ENCODE measurements at regions of chr19 and their contacts with region 1.

Region 1: GRCh38 chr19:47256688-47257443 is 541 bp downstream of the CCDC9 start:
- DNase-seq: peak; percentile 96 to 100 (median 98)
- ATAC-seq: peak; percentile 77
- H3K4me3 ChIP-seq: peak overlapping the region; percentile 72
- H3K4me3 Mint-ChIP-seq: peak overlapping the region; percentile 84
- H3K27ac ChIP-seq: peak overlapping the region; percentile 69 to 91
- H3K27ac Mint-ChIP-seq: peak overlapping the region; percentile 97
- H3K4me1 ChIP-seq: peaks cover 30% of the 10 kb centered on the region
- H3K4me1 Mint-ChIP-seq: peaks cover 39% of the 10 kb centered on the region
- H3K27me3 ChIP-seq: no peaks in the 10 kb centered on the region
- H3K27me3 Mint-ChIP-seq: no peaks in the 10 kb centered on the region
- CTCF ChIP-seq: no peak

Region 2: DNA sequence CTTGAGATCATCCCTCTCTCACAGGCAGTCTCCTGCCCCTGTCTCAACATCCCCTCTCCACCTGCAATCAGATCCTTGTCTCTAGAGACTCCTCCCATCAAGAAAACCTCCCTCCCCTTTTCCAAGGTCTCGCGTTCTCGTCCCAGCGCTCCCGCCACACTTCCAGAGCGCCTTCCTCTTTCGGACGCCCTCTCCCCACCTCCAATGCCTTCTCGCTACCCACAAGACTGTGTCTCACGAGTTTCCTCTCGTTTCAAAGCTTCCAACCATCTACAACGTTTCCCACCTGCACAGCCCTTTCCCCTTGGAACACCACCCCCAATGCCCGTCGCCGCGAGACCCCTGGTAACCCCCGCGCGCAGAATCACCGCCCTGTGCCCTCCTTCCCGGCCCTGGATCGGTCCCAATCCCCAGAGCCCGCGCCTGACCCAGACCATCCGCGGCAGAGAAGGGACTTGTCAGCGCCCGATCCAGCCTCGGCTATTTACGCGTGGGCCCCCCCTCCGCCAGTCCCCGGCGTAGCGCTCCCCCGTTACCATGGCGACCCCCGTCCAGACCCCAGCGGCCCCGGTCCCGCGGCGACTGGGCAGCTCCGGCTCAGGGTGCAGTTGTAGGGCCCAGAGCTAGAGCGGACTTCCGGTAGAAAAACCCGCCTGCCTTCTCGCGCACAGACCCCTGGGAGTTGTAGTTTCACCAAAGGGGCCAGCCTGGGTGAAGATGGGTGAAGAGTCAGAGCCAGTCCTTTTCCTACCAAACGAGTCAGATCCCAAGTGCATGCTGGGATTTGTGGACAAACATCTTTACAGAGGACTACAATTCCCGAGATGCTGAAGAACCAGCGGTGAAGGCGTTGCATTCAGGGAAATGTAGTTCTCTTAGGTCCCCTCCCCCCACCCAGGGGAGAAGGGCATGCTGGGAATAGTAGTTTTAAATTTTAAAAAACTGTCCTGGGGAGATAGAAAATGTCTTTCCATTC is 406.4 kb before region 1 on chr19 and contains the start of gene AP2S1:
- CTCF ChIA-PET with region 1: no interaction called
- POLR2A ChIA-PET with region 1: no interaction called
- intact Hi-C with region 1: loop called in 1 of 2 experiments (anchors 10 kb)
- DNase-seq: peak; percentile 81 to 98 (median 90)
- ATAC-seq: peak; percentile 95
- H3K4me3 ChIP-seq: peak within 1 kb of the TSS; percentile 76
- H3K4me3 Mint-ChIP-seq: peak within 1 kb of the TSS; percentile 90
- H3K27ac ChIP-seq: peak within 1 kb of the TSS; percentile 39 to 71
- H3K27ac Mint-ChIP-seq: peak within 1 kb of the TSS; percentile 62
- H3K4me1 ChIP-seq: peaks cover 17% of the 10 kb centered on the region
- H3K4me1 Mint-ChIP-seq: peaks cover 33% of the 10 kb centered on the region
- H3K27me3 ChIP-seq: no peaks in the 10 kb centered on the region
- H3K27me3 Mint-ChIP-seq: no peaks in the 10 kb centered on the region
- CTCF ChIP-seq: no peak
- total RNA-seq, gene AP2S1: 24.5 to 26.9 TPM

Region 3: DNA sequence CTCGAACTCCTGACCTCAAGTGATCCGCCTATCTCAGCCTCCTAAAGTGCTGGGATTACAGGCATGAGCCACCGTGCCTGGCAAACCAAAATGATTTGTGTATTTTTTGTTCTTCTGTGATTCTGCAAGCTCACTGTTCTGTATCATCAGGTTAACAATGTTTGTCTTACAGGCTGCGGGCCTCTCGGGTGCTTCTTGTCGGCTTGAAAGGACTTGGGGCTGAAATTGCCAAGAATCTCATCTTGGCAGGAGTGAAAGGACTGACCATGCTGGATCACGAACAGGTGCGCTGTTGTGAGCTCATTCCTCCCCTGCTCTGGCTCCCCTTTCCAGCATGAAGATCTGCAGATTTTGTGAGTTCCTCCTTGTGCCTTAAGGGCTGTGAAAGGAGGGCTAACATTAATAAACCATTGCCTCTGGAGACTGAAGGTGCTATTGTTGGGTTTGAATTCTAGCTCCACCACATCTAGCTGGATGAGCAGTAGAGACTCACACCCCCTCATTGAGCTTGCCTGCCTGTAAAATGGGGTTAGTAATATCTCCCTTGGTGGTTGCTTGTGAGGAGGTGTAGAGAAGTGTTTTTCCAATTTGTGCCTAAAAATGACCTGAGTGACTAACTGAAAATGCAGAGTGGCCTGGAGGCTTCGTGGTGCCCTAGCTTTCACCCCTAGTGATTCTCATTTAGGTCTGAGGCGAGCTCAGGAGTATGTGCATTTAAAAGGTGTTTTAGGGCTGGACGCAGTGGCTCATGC is 113.4 kb before region 1 on chr19:
- CTCF ChIA-PET with region 1: no interaction called
- POLR2A ChIA-PET with region 1: interaction called, 13 read pairs
- intact Hi-C with region 1: no loop called
- DNase-seq: no peak
- ATAC-seq: no peak
- H3K4me3 ChIP-seq: no peak overlapping the region
- H3K4me3 Mint-ChIP-seq: no peak overlapping the region
- H3K27ac ChIP-seq: no peak overlapping the region
- H3K27ac Mint-ChIP-seq: no peak overlapping the region
- H3K4me1 ChIP-seq: peaks cover 42% of the 10 kb centered on the region
- H3K4me1 Mint-ChIP-seq: peaks cover 56% of the 10 kb centered on the region
- H3K27me3 ChIP-seq: no peaks in the 10 kb centered on the region
- H3K27me3 Mint-ChIP-seq: no peaks in the 10 kb centered on the region
- CTCF ChIP-seq: no peak

Region 4: DNA sequence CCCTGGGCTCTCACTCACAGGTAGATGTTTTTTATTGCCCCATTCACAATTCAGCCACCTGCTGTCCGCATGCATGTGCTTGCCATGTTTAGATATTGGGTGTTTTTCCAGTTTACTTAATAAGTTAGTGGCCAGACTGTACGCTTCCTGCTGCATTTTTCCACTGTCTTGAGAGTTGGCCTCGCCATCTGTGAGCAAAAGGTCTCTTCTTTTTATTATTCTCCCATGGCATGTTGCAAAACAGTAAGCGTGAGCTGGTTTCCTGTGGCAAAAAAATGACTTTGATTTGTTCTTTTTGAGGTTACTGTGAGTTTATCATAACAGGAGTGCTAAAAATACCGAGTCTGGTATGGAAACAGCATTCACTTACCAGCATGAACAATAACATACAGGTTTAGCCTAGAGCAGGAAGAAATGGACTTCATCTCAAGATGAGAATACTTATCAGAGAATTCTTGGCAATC is 80.2 kb before region 1 on chr19:
- CTCF ChIA-PET with region 1: no interaction called
- POLR2A ChIA-PET with region 1: interaction called, 10 read pairs
- intact Hi-C with region 1: no loop called
- DNase-seq: peak in 11 of 14 experiments; percentile 22 to 82 (median 43)
- ATAC-seq: peak; percentile 85
- H3K4me3 ChIP-seq: peak overlapping the region; percentile 6
- H3K4me3 Mint-ChIP-seq: peak overlapping the region; percentile 81
- H3K27ac ChIP-seq: peak overlapping the region; percentile 60 to 68
- H3K27ac Mint-ChIP-seq: peak overlapping the region; percentile 98
- H3K4me1 ChIP-seq: peaks cover 56% of the 10 kb centered on the region
- H3K4me1 Mint-ChIP-seq: peaks cover 69% of the 10 kb centered on the region
- H3K27me3 ChIP-seq: no peaks in the 10 kb centered on the region
- H3K27me3 Mint-ChIP-seq: no peaks in the 10 kb centered on the region
- CTCF ChIP-seq: no peak

Region 5: GRCh38 chr19:47225746-47226425 is 31.0 kb before region 1 on chr19:
- CTCF ChIA-PET with region 1: no interaction called
- POLR2A ChIA-PET with region 1: interaction called, 32 read pairs
- intact Hi-C with region 1: loop called in 1 of 2 experiments (anchors 1 kb)
- DNase-seq: peak; percentile 79 to 95 (median 86)
- ATAC-seq: peak; percentile 54
- H3K4me3 ChIP-seq: peak overlapping the region; percentile 56
- H3K4me3 Mint-ChIP-seq: peak overlapping the region; percentile 72
- H3K27ac ChIP-seq: peak overlapping the region in 1 of 2 donors; percentile 85
- H3K27ac Mint-ChIP-seq: peak overlapping the region; percentile 85
- H3K4me1 ChIP-seq: peaks cover 48% of the 10 kb centered on the region
- H3K4me1 Mint-ChIP-seq: peaks cover 15% of the 10 kb centered on the region
- H3K27me3 ChIP-seq: no peaks in the 10 kb centered on the region
- H3K27me3 Mint-ChIP-seq: no peaks in the 10 kb centered on the region
- CTCF ChIP-seq: no peak

Region 6: GRCh38 chr19:47273313-47273977 is 16.6 kb after region 1 on chr19:
- CTCF ChIA-PET with region 1: interaction called, 3 read pairs
- POLR2A ChIA-PET with region 1: interaction called, 124 read pairs
- intact Hi-C with region 1: loop called (anchors 1 to 2 kb)
- DNase-seq: peak; percentile 82 to 95 (median 88)
- ATAC-seq: peak; percentile 63
- H3K4me3 ChIP-seq: peak overlapping the region; percentile 100
- H3K4me3 Mint-ChIP-seq: peak overlapping the region; percentile 100
- H3K27ac ChIP-seq: peak overlapping the region; percentile 92 to 99
- H3K27ac Mint-ChIP-seq: peak overlapping the region; percentile 99
- H3K4me1 ChIP-seq: peaks cover 24% of the 10 kb centered on the region
- H3K4me1 Mint-ChIP-seq: peaks cover 28% of the 10 kb centered on the region
- H3K27me3 ChIP-seq: no peaks in the 10 kb centered on the region
- H3K27me3 Mint-ChIP-seq: no peaks in the 10 kb centered on the region
- CTCF ChIP-seq: no peak

Region 7: DNA sequence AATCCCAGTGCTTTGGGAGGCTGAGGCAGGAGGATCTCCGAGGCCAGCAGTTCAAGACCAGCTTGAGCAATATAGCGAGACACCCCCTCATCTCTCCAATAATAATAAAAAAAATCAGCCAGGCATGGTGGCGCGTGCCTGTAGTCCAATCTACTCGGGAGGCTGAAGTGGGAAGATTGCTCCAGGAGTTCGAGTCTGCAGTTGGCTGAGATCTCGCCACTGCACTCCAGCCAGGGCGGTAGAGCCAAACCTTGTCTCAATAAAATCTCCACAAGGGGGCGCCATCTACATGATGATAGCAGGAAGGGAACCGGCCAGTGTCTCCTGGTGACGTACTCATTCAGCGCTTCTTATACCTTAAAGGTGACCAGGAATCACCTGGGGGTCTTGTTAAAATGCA is 39.2 kb after region 1 on chr19:
- CTCF ChIA-PET with region 1: no interaction called
- POLR2A ChIA-PET with region 1: no interaction called
- intact Hi-C with region 1: no loop called
- DNase-seq: peak; percentile 47 to 90 (median 70)
- ATAC-seq: peak; percentile 94
- H3K4me3 ChIP-seq: no peak overlapping the region
- H3K4me3 Mint-ChIP-seq: no peak overlapping the region
- H3K27ac ChIP-seq: no peak overlapping the region
- H3K27ac Mint-ChIP-seq: no peak overlapping the region
- H3K4me1 ChIP-seq: peaks cover 8% of the 10 kb centered on the region
- H3K4me1 Mint-ChIP-seq: peaks cover 4% of the 10 kb centered on the region
- H3K27me3 ChIP-seq: no peaks in the 10 kb centered on the region
- H3K27me3 Mint-ChIP-seq: no peaks in the 10 kb centered on the region
- CTCF ChIP-seq: peak; percentile 80